ENCODE measurements at regions of chr9 and their contacts with region 1.

Region 1: GRCh38 chr9:68887232-68887631 is 126.7 kb downstream of the PRKACG start:
- DNase-seq: peak in 2 of 9 donors; percentile 22 to 28
- ATAC-seq: peak; percentile 37
- H3K4me3 ChIP-seq: no peak overlapping the region
- H3K4me3 Mint-ChIP-seq: peak overlapping the region; percentile 15 to 69 (median 46)
- H3K27ac ChIP-seq: no peak overlapping the region
- H3K27ac Mint-ChIP-seq: peak overlapping the region; percentile 15 to 67 (median 34)
- H3K4me1 ChIP-seq: peaks cover 0 to 29% of the 10 kb centered on the region in 2 donors
- H3K4me1 Mint-ChIP-seq: peaks cover 18 to 57% (median 46%) of the 10 kb centered on the region in 7 donors
- H3K27me3 ChIP-seq: no peaks in the 10 kb centered on the region
- H3K27me3 Mint-ChIP-seq: peaks cover 0 to 3% (median 0%) of the 10 kb centered on the region in 5 donors

Region 2: GRCh38 chr9:68785965-68786364 is 101.3 kb before region 1 on chr9:
- CTCF ChIA-PET with region 1: interaction called, 3 read pairs
- POLR2A ChIA-PET with region 1: no interaction called
- intact Hi-C with region 1: loop called in 1 of 2 experiments (anchors 2 kb)
- DNase-seq: no peak
- ATAC-seq: no peak
- H3K4me3 ChIP-seq: no peak overlapping the region
- H3K4me3 Mint-ChIP-seq: peak overlapping the region in 1 of 10 donors; percentile 10
- H3K27ac ChIP-seq: no peak overlapping the region
- H3K27ac Mint-ChIP-seq: peak overlapping the region in 3 of 9 donors; percentile 9 to 28 (median 19)
- H3K4me1 ChIP-seq: peaks cover 22 to 39% of the 10 kb centered on the region in 2 donors
- H3K4me1 Mint-ChIP-seq: peaks cover 0 to 11% (median 6%) of the 10 kb centered on the region in 7 donors
- H3K27me3 ChIP-seq: no peaks in the 10 kb centered on the region
- H3K27me3 Mint-ChIP-seq: no peaks in the 10 kb centered on the region

Region 3: DNA sequence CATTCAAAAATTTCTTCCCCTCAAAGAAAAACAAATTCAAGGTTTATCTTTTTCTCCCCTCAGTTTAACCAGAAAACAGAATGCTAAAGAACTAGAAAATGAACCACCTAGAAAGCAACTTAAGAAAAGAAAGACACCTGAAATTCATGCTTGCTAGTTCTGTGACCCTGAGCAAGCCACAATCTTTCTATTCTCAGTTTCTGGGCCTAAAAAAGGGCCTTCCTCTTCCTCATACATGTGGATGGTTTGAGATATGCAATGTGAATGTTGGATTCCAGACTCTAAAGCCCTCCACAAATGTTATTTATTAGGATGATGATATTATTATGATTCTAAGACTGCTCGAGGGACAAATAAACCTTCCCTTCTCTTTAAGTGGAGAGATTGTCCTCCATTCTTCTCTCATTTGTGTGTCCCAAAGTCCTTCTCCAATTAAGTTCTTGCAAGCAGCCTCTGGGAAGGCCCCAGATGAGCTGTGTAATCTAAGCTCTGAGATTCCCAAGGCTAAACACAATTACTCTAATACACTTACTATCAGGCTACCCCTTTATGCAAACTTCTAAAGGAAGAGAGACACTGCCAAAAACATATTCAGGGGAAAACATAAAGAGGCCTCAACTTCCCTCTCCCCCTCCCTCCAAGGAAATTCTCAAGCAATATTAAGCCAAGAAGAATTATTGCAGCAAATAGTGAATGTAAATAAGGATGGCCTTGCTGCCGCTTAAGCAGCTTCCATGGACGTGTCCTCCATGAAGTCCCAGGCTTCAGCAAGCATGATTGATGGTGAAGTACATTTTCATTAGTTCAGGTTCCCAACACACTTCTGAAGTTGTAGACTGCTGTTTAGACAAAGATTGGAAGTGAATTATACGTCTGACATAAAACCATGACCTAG is 46.4 kb after region 1 on chr9:
- CTCF ChIA-PET with region 1: no interaction called
- POLR2A ChIA-PET with region 1: no interaction called
- intact Hi-C with region 1: loop called in 1 of 2 experiments (anchors 10 kb)
- DNase-seq: no peak
- ATAC-seq: no peak
- H3K4me3 ChIP-seq: no peak overlapping the region
- H3K4me3 Mint-ChIP-seq: no peak overlapping the region
- H3K27ac ChIP-seq: no peak overlapping the region
- H3K27ac Mint-ChIP-seq: no peak overlapping the region
- H3K4me1 ChIP-seq: peaks cover 4 to 14% of the 10 kb centered on the region in 2 donors
- H3K4me1 Mint-ChIP-seq: peaks cover 11 to 22% (median 15%) of the 10 kb centered on the region in 7 donors
- H3K27me3 ChIP-seq: no peaks in the 10 kb centered on the region
- H3K27me3 Mint-ChIP-seq: peaks cover 20 to 52% (median 34%) of the 10 kb centered on the region in 5 donors

Region 4: DNA sequence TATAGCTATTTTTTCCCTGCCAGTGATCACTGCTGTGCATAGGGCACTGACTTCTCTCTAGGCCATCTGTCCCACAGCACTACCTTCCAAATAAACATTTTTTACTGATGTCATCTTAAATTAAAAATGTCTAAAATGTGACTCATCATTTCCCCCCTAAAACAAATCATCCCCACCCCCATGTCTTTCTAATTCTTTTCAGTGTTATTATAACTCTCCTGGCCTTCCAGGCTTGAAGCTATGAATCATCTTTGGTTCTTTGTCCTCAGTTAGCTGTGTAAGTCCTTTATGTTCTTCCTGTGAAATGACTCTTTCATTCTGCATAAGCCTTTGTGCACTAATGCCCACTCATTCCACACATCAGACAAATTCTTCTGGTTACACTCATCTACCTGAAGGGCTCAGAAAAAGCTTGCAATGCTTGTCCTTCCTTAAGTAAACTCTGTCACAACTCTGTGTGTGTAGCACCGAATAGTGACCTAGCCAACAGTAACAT is 1011.5 kb after region 1 on chr9:
- CTCF ChIA-PET with region 1: no interaction called
- POLR2A ChIA-PET with region 1: no interaction called
- intact Hi-C with region 1: no loop called
- DNase-seq: no peak
- ATAC-seq: no peak
- H3K4me3 ChIP-seq: no peak overlapping the region
- H3K4me3 Mint-ChIP-seq: no peak overlapping the region
- H3K27ac ChIP-seq: no peak overlapping the region
- H3K27ac Mint-ChIP-seq: no peak overlapping the region
- H3K4me1 ChIP-seq: no peaks in the 10 kb centered on the region
- H3K4me1 Mint-ChIP-seq: no peaks in the 10 kb centered on the region
- H3K27me3 ChIP-seq: no peaks in the 10 kb centered on the region
- H3K27me3 Mint-ChIP-seq: peaks cover 0 to 6% (median 0%) of the 10 kb centered on the region in 5 donors

Measured in naive thymus-derived CD4-positive, alpha-beta T cell (primary cell).